CD4-positive, alpha-beta T cell (primary cell): ENCODE measurements at regions of chr11 and their contacts with region 1.

Region 1: GRCh38 chr11:85595285-85595884 is 31.8 kb downstream of the DLG2 start:
- DNase-seq: peak in 3 of 14 experiments; percentile 64 to 73 (median 72)
- ATAC-seq: peak; percentile 60
- H3K4me3 ChIP-seq: no peak overlapping the region
- H3K4me3 Mint-ChIP-seq: no peak overlapping the region
- H3K27ac ChIP-seq: no peak overlapping the region
- H3K27ac Mint-ChIP-seq: no peak overlapping the region
- H3K4me1 ChIP-seq: no peaks in the 10 kb centered on the region
- H3K4me1 Mint-ChIP-seq: no peaks in the 10 kb centered on the region
- H3K27me3 ChIP-seq: no peaks in the 10 kb centered on the region
- H3K27me3 Mint-ChIP-seq: no peaks in the 10 kb centered on the region
- CTCF ChIP-seq: peak; percentile 86

Region 2: GRCh38 chr11:85517272-85517671 is 78.1 kb before region 1 on chr11:
- CTCF ChIA-PET with region 1: no interaction called
- POLR2A ChIA-PET with region 1: no interaction called
- intact Hi-C with region 1: no loop called
- DNase-seq: no peak
- ATAC-seq: no peak
- H3K4me3 ChIP-seq: no peak overlapping the region
- H3K4me3 Mint-ChIP-seq: no peak overlapping the region
- H3K27ac ChIP-seq: no peak overlapping the region
- H3K27ac Mint-ChIP-seq: no peak overlapping the region
- H3K4me1 ChIP-seq: no peaks in the 10 kb centered on the region
- H3K4me1 Mint-ChIP-seq: no peaks in the 10 kb centered on the region
- H3K27me3 ChIP-seq: no peaks in the 10 kb centered on the region
- H3K27me3 Mint-ChIP-seq: no peaks in the 10 kb centered on the region
- CTCF ChIP-seq: no peak

Region 3: GRCh38 chr11:85647604-85648299 is 52.4 kb after region 1 on chr11 and contains the start of gene TMEM126A:
- CTCF ChIA-PET with region 1: no interaction called
- POLR2A ChIA-PET with region 1: no interaction called
- intact Hi-C with region 1: loop called in 1 of 2 experiments (anchors 1 kb)
- DNase-seq: peak; percentile 81 to 95 (median 88)
- ATAC-seq: peak; percentile 99
- H3K4me3 ChIP-seq: peak within 1 kb of the TSS; percentile 84
- H3K4me3 Mint-ChIP-seq: peak within 1 kb of the TSS; percentile 97
- H3K27ac ChIP-seq: peak within 1 kb of the TSS; percentile 77 to 84
- H3K27ac Mint-ChIP-seq: peak within 1 kb of the TSS; percentile 89
- H3K4me1 ChIP-seq: peaks cover 20% of the 10 kb centered on the region
- H3K4me1 Mint-ChIP-seq: peaks cover 44% of the 10 kb centered on the region
- H3K27me3 ChIP-seq: peaks cover 0 to 8% of the 10 kb centered on the region in 2 experiments
- H3K27me3 Mint-ChIP-seq: peaks cover 23% of the 10 kb centered on the region
- CTCF ChIP-seq: no peak
- total RNA-seq, gene TMEM126A: 17.0 to 19.5 TPM

Region 4: GRCh38 chr11:85961930-85962363 is 366.6 kb after region 1 on chr11:
- CTCF ChIA-PET with region 1: no interaction called
- POLR2A ChIA-PET with region 1: no interaction called
- intact Hi-C with region 1: loop called in 1 of 2 experiments (anchors 10 kb)
- DNase-seq: no peak
- ATAC-seq: no peak
- H3K4me3 ChIP-seq: no peak overlapping the region
- H3K4me3 Mint-ChIP-seq: no peak overlapping the region
- H3K27ac ChIP-seq: no peak overlapping the region
- H3K27ac Mint-ChIP-seq: no peak overlapping the region
- H3K4me1 ChIP-seq: no peaks in the 10 kb centered on the region
- H3K4me1 Mint-ChIP-seq: no peaks in the 10 kb centered on the region
- H3K27me3 ChIP-seq: no peaks in the 10 kb centered on the region
- H3K27me3 Mint-ChIP-seq: no peaks in the 10 kb centered on the region
- CTCF ChIP-seq: no peak

Region 5: DNA sequence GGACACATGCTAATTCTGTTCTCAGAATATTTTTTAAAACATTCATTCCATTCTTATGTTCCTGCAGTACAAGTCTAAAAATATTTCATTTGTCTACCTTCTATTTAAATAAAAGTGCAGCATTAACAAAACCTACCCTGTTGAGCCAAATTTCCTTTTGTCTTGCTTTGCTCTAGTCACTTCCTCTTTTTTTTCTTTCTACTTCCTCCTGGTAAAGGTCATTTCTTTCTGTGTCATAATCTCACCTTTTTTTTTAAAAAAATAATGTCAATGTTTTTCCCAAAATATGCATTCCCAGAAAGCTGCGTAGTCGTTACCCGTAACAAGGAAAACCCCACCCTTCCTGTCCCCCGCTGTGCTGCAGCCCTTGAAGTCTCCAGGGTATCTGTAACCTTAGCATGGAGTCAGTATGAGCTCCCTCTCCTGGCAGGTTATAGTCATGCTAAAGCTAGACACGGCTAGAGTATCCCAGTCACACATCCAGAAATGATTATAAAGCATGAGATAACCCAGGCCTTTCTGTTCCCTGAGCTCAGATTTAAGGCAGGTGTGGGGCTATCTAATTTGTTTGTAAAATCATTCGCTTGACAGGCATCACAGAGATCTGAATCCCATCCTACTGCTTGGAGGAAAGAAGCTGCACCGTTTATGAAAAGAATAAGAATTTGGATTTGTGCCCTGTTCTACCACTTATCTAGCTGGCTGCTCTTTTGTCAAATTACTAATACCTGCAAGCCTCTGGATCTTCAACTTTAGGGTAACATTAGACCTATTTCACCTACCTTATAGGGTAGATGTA is 598.1 kb after region 1 on chr11:
- CTCF ChIA-PET with region 1: no interaction called
- POLR2A ChIA-PET with region 1: no interaction called
- intact Hi-C with region 1: loop called (anchors 1 to 2 kb)
- DNase-seq: peak; percentile 18 to 84 (median 42)
- ATAC-seq: peak; percentile 100
- H3K4me3 ChIP-seq: peak overlapping the region; percentile 37
- H3K4me3 Mint-ChIP-seq: peak overlapping the region; percentile 94
- H3K27ac ChIP-seq: no peak overlapping the region
- H3K27ac Mint-ChIP-seq: peak overlapping the region; percentile 69
- H3K4me1 ChIP-seq: peaks cover 4% of the 10 kb centered on the region
- H3K4me1 Mint-ChIP-seq: peaks cover 15% of the 10 kb centered on the region
- H3K27me3 ChIP-seq: no peaks in the 10 kb centered on the region
- H3K27me3 Mint-ChIP-seq: no peaks in the 10 kb centered on the region
- CTCF ChIP-seq: peak; percentile 74

Region 6: DNA sequence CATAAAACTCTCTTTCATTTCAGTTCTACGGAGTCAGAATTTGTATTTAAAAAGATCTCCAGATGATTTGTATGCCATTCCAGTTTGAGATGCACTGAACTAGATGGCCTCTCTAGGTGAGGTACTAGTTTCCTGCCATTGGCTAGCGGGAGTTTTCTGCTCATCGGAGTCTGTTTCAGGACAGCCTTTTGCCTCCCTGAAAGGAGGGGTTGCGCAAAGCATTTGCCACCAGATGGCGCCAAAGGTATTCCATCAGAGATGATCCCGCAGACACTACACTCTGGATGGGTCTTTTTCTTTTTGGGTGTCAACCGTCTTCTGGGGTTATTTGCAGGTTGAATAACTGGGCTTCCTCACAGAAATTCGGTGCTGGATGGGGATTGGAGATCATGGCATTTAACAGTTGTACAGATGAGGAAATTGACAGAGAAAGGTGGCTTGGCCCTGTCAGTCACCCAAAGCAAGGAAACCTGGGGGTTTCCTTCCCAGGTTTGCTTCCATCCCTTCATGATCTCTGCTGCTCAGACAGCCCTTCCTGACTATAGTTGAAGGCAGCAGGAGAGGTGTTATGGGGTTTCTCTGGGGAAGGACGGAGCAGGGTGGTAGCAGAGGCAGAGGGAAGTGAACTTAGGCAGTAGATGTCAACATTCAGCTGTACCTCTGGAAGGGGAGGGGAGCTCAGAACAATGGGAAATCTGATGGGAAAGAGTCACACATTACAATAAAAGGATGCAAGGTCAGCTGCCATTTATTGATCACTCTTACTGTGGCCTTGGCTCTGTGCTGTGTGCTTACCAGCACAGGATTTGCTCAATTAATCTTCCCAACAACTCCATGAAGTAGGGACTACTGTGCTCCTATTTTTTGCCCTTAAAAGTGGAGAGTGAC is 860.9 kb after region 1 on chr11:
- CTCF ChIA-PET with region 1: no interaction called
- POLR2A ChIA-PET with region 1: no interaction called
- intact Hi-C with region 1: loop called in 1 of 2 experiments (anchors 10 kb)
- DNase-seq: peak; percentile 50 to 79 (median 65)
- ATAC-seq: peak; percentile 43
- H3K4me3 ChIP-seq: no peak overlapping the region
- H3K4me3 Mint-ChIP-seq: no peak overlapping the region
- H3K27ac ChIP-seq: no peak overlapping the region
- H3K27ac Mint-ChIP-seq: no peak overlapping the region
- H3K4me1 ChIP-seq: no peaks in the 10 kb centered on the region
- H3K4me1 Mint-ChIP-seq: no peaks in the 10 kb centered on the region
- H3K27me3 ChIP-seq: no peaks in the 10 kb centered on the region
- H3K27me3 Mint-ChIP-seq: no peaks in the 10 kb centered on the region
- CTCF ChIP-seq: peak; percentile 91

Region 7: DNA sequence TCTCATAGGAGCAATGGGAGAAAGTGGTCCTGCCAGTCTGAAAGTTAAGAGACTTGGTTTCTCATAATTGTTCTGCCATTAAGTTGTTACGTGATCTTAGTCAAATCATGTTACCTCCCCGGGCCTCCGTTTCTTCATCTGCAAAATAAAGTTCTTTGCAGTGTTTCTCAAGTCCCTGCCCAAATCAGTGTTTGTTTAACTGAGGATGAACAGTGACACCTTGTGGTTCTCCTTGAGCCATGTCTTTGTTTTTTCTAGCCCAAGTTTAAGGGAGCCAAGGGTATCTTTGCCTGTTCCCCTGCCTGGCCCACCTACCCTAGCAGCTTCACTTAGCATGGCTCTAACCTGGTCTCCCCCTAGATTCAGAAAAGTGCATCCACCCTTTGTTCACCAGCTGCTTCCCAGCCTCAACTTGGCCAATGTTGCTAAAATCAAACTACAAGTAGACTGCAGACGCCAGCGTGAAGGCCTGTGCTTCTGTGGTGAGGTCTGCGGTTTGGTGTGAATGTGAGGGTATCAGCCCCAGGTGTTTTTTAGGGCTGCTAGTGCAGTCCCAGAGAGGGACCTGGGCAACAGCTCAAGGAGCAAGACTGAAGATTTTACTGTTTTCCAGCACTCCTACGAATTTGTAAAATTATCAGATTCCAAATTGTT is 1324.3 kb after region 1 on chr11:
- CTCF ChIA-PET with region 1: no interaction called
- POLR2A ChIA-PET with region 1: no interaction called
- intact Hi-C with region 1: loop called in 1 of 2 experiments (anchors 2 kb)
- DNase-seq: peak in 3 of 14 experiments; percentile 20 to 24 (median 22)
- ATAC-seq: no peak
- H3K4me3 ChIP-seq: no peak overlapping the region
- H3K4me3 Mint-ChIP-seq: no peak overlapping the region
- H3K27ac ChIP-seq: no peak overlapping the region
- H3K27ac Mint-ChIP-seq: no peak overlapping the region
- H3K4me1 ChIP-seq: peaks cover 3% of the 10 kb centered on the region
- H3K4me1 Mint-ChIP-seq: peaks cover 9% of the 10 kb centered on the region
- H3K27me3 ChIP-seq: no peaks in the 10 kb centered on the region
- H3K27me3 Mint-ChIP-seq: no peaks in the 10 kb centered on the region
- CTCF ChIP-seq: no peak